GM12878 (cell line): ENCODE measurements at regions of chr2 and their contacts with region 1.

Region 1: GRCh38 chr2:24421668-24422067 is 61.3 kb upstream of the ITSN2 start:
- DNase-seq: no peak
- ATAC-seq: peak; percentile 88
- H3K4me3 ChIP-seq: no peak overlapping the region
- H3K27ac ChIP-seq: no peak overlapping the region
- H3K4me1 ChIP-seq: no peaks in the 10 kb centered on the region
- H3K27me3 ChIP-seq: no peaks in the 10 kb centered on the region; a peak in 1 of 4 replicates
- CTCF ChIP-seq: peak; percentile 45 to 68 (median 60); a peak in 5 of 6 replicates
- EP300 ChIP-seq: no peak
- POLR2A ChIP-seq: no peak
- RAD21 ChIP-seq: peak; percentile 71

Region 2: DNA sequence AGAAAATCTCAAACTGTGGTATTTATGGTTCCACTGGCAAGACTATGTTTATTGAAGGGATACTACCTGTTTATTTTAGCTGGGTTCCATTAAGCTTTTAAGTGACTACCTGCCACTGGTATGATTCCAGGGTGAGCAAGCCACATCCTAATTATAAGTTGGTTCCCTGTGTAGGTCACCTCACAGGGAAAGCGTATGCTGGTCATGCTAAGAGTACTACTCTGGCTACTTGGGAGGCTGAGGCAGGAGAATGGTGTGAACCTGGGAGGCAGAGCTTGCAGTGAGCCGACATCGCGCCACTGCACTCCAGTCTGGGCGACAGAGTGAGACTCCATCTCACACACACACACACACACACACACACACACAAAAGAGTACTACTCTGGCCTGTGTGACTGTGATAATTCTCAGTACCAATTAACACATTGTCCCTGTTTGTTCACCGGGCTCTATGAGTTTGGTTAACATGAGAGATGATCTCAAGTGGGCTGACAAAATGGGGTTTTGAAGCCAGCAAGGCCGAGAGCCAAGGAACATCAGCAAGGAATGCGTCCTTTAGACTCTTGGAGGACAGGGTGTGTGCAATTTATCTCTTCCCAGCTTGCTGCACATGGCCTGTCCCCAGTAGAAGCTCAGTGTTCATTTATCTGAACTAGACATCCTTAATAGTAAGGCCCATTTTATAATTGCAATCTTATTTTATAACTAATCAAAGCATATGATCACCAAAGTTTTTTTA is 46.1 kb before region 1 on chr2:
- CTCF ChIA-PET with region 1: no interaction called
- POLR2A ChIA-PET with region 1: no interaction called
- RAD21 ChIA-PET with region 1: no interaction called
- SMC1A ChIA-PET with region 1: no interaction called
- in situ Hi-C with region 1: no loop called
- intact Hi-C with region 1: no loop called
- DNase-seq: no peak
- ATAC-seq: no peak
- H3K4me3 ChIP-seq: no peak overlapping the region
- H3K27ac ChIP-seq: no peak overlapping the region
- H3K4me1 ChIP-seq: no peaks in the 10 kb centered on the region
- H3K27me3 ChIP-seq: no peaks in the 10 kb centered on the region
- CTCF ChIP-seq: no peak
- EP300 ChIP-seq: no peak
- POLR2A ChIP-seq: no peak
- RAD21 ChIP-seq: no peak

Region 3: GRCh38 chr2:24409700-24410556 is 11.7 kb before region 1 on chr2:
- CTCF ChIA-PET with region 1: interaction called, 27 read pairs
- POLR2A ChIA-PET with region 1: no interaction called
- RAD21 ChIA-PET with region 1: interaction called, 8 read pairs
- SMC1A ChIA-PET with region 1: interaction called, 24 read pairs
- in situ Hi-C with region 1: no loop called
- intact Hi-C with region 1: no loop called
- DNase-seq: peak; percentile 31
- ATAC-seq: peak; percentile 91
- H3K4me3 ChIP-seq: no peak overlapping the region
- H3K27ac ChIP-seq: no peak overlapping the region
- H3K4me1 ChIP-seq: no peaks in the 10 kb centered on the region
- H3K27me3 ChIP-seq: no peaks in the 10 kb centered on the region
- CTCF ChIP-seq: peak; percentile 79 to 89 (median 82)
- EP300 ChIP-seq: no peak
- POLR2A ChIP-seq: no peak
- RAD21 ChIP-seq: peak; percentile 97

Region 4: GRCh38 chr2:24577481-24577880 is 155.8 kb after region 1 on chr2:
- CTCF ChIA-PET with region 1: interaction called, 6 read pairs
- POLR2A ChIA-PET with region 1: no interaction called
- RAD21 ChIA-PET with region 1: interaction called, 4 read pairs
- SMC1A ChIA-PET with region 1: interaction called, 3 read pairs
- in situ Hi-C with region 1: no loop called
- intact Hi-C with region 1: loop called (anchors 5 kb)
- DNase-seq: peak; percentile 89
- ATAC-seq: peak; percentile 87
- H3K4me3 ChIP-seq: 0 out of 2 replicates have a peak overlapping the region, but pooled peaks have one; percentile 14
- H3K27ac ChIP-seq: peak overlapping the region; percentile 80
- H3K4me1 ChIP-seq: peaks cover 47% of the 10 kb centered on the region
- H3K27me3 ChIP-seq: no peaks in the 10 kb centered on the region
- CTCF ChIP-seq: no peak
- EP300 ChIP-seq: peak; percentile 89 to 93
- POLR2A ChIP-seq: no peak
- RAD21 ChIP-seq: no peak

Region 5: DNA sequence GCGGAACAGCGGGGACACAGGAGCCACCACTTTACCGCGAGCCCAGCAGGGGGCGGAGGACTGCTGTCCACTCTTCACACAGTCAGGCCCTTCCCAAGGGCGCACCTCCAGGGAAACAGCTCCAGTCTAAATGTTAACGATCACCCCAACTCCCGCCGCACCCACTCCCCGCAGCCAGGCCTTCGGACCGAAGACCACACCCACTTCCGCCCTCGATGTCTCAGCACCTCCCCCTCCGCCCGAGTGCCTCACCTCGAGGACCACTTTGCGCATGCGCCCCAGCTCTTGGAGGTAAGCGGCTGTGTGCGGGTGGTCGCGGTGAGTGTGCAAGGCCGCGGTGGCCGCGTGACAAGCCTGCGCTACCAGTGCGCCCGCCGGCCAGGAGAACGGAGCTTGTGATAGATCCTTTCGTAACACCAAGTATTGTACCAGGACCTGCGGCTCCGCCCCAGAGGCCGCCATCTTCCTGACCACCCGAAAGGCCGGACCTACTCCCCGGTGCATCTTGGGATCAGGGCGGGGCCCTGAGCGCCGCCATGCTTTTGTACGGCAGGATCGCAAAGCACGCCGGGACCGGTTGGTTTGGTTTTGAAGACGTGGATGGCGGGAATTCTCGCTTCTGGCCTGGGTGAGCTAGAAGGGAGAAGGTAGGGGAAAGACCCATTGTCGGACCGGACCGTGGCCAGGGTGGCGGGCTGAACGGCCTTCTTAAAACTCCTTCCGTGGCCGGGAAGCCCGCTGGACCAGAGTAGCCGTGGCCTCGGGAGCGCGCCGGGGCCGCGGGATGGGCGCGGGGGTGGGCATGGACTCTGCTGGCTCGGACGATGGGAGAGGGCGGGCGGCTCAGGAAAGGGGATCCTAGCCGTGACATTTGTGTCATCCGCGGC is 371.4 kb after region 1 on chr2 and contains the starts of genes CENPO and PTRHD1:
- CTCF ChIA-PET with region 1: interaction called, 15 read pairs
- POLR2A ChIA-PET with region 1: no interaction called
- RAD21 ChIA-PET with region 1: interaction called, 9 read pairs
- SMC1A ChIA-PET with region 1: interaction called, 6 read pairs
- in situ Hi-C with region 1: no loop called
- intact Hi-C with region 1: no loop called
- DNase-seq: peak; percentile 92
- ATAC-seq: peak; percentile 97
- H3K4me3 ChIP-seq: peak within 1 kb of the TSS; percentile 97
- H3K27ac ChIP-seq: peak within 1 kb of the TSS; percentile 98
- H3K4me1 ChIP-seq: peaks cover 6% of the 10 kb centered on the region
- H3K27me3 ChIP-seq: no peaks in the 10 kb centered on the region
- CTCF ChIP-seq: peak; percentile 36 to 40 (median 37); a peak in 5 of 6 replicates
- EP300 ChIP-seq: no peak
- POLR2A ChIP-seq: peak; percentile 93
- RAD21 ChIP-seq: no peak
- polyA plus RNA-seq, gene CENPO: 18.7 to 23.1 TPM
- polyA plus RNA-seq, gene PTRHD1: 30.6 to 43.9 TPM

Region 6: GRCh38 chr2:25131567-25132298 is 710.1 kb after region 1 on chr2:
- CTCF ChIA-PET with region 1: interaction called, 7 read pairs
- POLR2A ChIA-PET with region 1: no interaction called
- RAD21 ChIA-PET with region 1: interaction called, 11 read pairs
- SMC1A ChIA-PET with region 1: no interaction called
- in situ Hi-C with region 1: no loop called
- intact Hi-C with region 1: no loop called
- DNase-seq: no peak
- ATAC-seq: no peak
- H3K4me3 ChIP-seq: no peak overlapping the region
- H3K27ac ChIP-seq: no peak overlapping the region
- H3K4me1 ChIP-seq: no peaks in the 10 kb centered on the region
- H3K27me3 ChIP-seq: peaks cover 0 to 5% of the 10 kb centered on the region in 2 experiments; a peak in 3 of 4 replicates
- CTCF ChIP-seq: no peak
- EP300 ChIP-seq: no peak
- POLR2A ChIP-seq: no peak
- RAD21 ChIP-seq: no peak